Heart left ventricle (tissue), 16 donors: ENCODE measurements at regions of chr15 and their contacts with region 1.

Region 1: GRCh38 chr15:77224352-77224751 is 153.4 kb upstream of the TSPAN3 start:
- DNase-seq: no peak
- ATAC-seq: peak in 1 of 4 donors; percentile 69
- H3K4me3 ChIP-seq: no peak overlapping the region
- H3K27ac ChIP-seq: peak overlapping the region in 6 of 12 donors; percentile 0 to 21 (median 11)
- H3K4me1 ChIP-seq: peaks cover 0 to 51% (median 18%) of the 10 kb centered on the region in 12 donors
- H3K27me3 ChIP-seq: no peaks in the 10 kb centered on the region
- CTCF ChIP-seq: no peak
- POLR2A ChIP-seq: no peak

Region 2: DNA sequence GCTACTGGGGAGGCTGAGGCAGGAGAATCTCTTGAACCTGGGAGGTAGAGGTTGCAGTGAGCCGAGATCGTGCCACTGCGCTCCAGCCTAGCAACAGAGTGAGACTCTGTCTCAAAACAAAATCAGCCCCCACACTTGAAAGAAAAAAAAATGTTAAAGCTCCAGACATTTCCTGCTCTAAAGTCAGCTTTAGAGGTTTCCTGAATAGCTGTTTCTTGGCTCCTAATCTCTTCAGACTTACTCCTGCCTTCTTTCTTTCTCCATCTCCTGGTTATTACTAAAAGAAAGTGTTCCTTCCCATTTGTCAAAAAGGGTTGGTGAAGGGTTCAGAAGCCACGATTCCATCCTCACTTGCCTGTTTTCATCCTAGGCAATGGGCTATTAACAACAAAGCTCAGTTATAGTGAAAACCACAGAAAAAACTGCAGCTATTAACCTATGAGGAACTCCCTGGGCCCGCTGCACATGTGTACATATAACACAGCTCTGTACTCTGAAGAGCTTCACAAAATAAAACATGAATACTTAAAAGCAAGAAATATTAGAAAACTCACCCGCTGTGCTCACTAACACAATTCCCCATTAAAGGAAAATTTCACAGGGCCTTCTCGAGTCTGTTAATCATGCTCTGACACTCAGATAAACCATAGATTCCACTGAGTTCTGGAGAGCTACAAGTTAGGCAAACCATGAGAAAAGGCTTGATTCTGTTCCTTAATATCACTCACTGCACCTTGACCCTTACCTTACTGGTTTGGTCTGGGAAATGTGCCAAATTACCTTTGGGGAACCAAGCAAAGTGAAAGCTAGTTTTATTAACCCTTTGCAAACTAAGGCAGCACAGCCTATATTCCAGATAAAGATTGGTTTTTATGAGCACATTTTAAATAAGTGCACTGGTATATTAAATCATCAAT is 63.5 kb before region 1 on chr15:
- intact Hi-C with region 1: no loop called
- DNase-seq: no peak
- ATAC-seq: peak in 2 of 4 donors; percentile 27 to 50
- H3K4me3 ChIP-seq: no peak overlapping the region
- H3K27ac ChIP-seq: peak overlapping the region in 6 of 12 donors; percentile 16 to 46 (median 43)
- H3K4me1 ChIP-seq: peaks cover 0 to 44% (median 19%) of the 10 kb centered on the region in 12 donors
- H3K27me3 ChIP-seq: no peaks in the 10 kb centered on the region
- CTCF ChIP-seq: no peak
- POLR2A ChIP-seq: no peak

Region 3: GRCh38 chr15:77235566-77235965 is 11.2 kb after region 1 on chr15:
- intact Hi-C with region 1: loop called in 1 of 10 experiments (anchors 2 kb)
- DNase-seq: no peak
- ATAC-seq: no peak
- H3K4me3 ChIP-seq: no peak overlapping the region
- H3K27ac ChIP-seq: no peak overlapping the region
- H3K4me1 ChIP-seq: no peaks in the 10 kb centered on the region
- H3K27me3 ChIP-seq: no peaks in the 10 kb centered on the region
- CTCF ChIP-seq: no peak
- POLR2A ChIP-seq: no peak